ENCODE measurements at regions of chr17 and their contacts with region 1.

Region 1: GRCh38 chr17:76121932-76122430 is 18.4 kb upstream of the EXOC7 start:
- DNase-seq: peak in 1 of 2 donors; percentile 31
- H3K4me3 ChIP-seq: peak overlapping the region in 1 of 2 donors; percentile 24
- H3K27ac ChIP-seq: no peak overlapping the region
- H3K4me1 ChIP-seq: no peaks in the 10 kb centered on the region
- H3K27me3 ChIP-seq: no peaks in the 10 kb centered on the region
- CTCF ChIP-seq: no peak
- POLR2A ChIP-seq: no peak

Region 2: GRCh38 chr17:76278952-76279741 is 157.2 kb after region 1 on chr17:
- intact Hi-C with region 1: loop called (anchors 5 kb)
- DNase-seq: peak; percentile 85
- H3K4me3 ChIP-seq: no peak overlapping the region
- H3K27ac ChIP-seq: no peak overlapping the region
- H3K4me1 ChIP-seq: no peaks in the 10 kb centered on the region
- H3K27me3 ChIP-seq: no peaks in the 10 kb centered on the region
- CTCF ChIP-seq: peak; percentile 94 to 99 (median 96)
- POLR2A ChIP-seq: no peak

Region 3: GRCh38 chr17:76296186-76296585 is 174.2 kb after region 1 on chr17:
- intact Hi-C with region 1: no loop called
- DNase-seq: no peak
- H3K4me3 ChIP-seq: no peak overlapping the region
- H3K27ac ChIP-seq: no peak overlapping the region
- H3K4me1 ChIP-seq: no peaks in the 10 kb centered on the region
- H3K27me3 ChIP-seq: no peaks in the 10 kb centered on the region
- CTCF ChIP-seq: no peak
- POLR2A ChIP-seq: no peak

Measured in uterus (tissue), 4 donors.